Psoas muscle (tissue), 8 donors: ENCODE measurements at regions of chr12 and their contacts with region 1.

Region 1: DNA sequence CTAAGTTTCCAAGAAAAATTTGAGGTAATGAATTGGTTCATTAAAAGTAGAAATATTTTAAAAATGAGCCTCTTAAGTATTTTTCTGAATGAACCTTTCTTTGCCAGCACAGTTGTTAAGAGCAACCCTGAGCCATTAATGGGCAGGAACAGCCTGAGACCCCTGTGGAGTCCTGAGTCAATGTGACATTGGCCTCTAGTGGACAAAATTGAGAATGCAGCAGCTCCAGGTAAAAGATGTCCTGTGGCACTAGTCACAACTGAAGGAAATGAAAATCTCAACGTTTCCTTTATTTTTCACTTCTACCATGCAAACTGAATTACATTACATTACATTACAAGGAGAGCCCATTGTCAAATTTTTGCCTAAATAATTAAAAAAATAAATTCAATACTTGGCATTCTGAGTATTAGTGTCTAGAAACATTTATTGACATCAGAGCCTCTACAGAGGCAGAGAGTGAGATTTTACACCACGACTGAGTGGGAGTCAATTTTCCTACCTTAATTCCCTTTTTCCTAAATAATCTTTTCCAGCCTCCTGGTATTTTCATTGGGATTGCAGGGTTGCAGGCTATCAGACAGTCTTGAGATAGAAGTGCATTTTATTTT is 135.7 kb downstream of the PPM1H start:
- DNase-seq: no peak
- ATAC-seq: peak in 3 of 4 donors; percentile 56 to 84 (median 70)
- H3K4me3 ChIP-seq: no peak overlapping the region
- H3K27ac ChIP-seq: no peak overlapping the region
- H3K4me1 ChIP-seq: no peaks in the 10 kb centered on the region
- H3K27me3 ChIP-seq: no peaks in the 10 kb centered on the region
- CTCF ChIP-seq: peak; percentile 92

Region 2: DNA sequence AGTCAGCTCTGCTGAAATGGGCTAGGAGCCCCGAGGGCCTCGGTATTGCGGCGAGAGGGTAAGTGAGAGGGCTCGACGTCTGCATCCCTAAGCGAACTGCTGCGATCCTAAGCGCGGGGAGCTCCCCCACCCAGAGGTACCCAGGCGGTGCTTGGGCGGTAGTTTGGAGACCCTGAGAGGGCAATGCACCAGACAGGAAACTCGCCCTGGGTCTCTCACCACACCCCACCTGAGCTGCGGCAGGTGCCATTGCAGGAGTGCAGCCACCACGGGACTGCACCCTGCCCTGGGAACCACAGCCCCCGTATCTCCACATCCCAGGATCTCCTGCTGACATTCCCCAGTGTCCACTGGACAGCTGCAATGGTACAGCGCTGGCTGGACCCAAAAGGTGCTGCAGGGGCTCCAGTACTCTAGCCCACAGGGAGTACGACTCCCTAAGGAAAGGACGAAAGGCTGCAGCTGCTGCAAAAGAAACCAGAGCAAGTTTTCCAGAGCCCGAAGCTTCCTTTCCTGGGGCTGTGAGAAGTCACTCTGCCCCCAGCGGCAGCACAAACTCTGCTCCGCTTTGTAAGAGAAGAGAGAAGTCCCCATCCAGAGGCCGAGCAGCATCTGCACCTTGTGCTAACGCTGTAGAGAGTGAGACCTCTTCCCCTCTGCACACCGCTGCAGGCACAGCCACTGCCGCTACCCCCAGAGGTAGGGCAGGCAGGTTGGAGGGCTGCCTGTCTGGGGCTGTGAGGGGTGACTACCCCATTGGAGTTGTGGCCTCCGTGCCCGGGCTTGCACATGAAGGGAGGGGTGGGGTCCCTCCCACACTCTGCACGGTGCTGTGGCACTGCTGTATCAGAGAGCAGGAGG is 363.7 kb before region 1 on chr12:
- intact Hi-C with region 1: loop called (anchors 5 to 10 kb)
- DNase-seq: peak; percentile 27 to 52
- ATAC-seq: peak in 3 of 4 donors; percentile 53 to 73 (median 62)
- H3K4me3 ChIP-seq: peak overlapping the region; percentile 62
- H3K27ac ChIP-seq: no peak overlapping the region
- H3K4me1 ChIP-seq: no peaks in the 10 kb centered on the region
- H3K27me3 ChIP-seq: peaks cover 0 to 30% (median 4%) of the 10 kb centered on the region in 3 donors
- CTCF ChIP-seq: peak; percentile 25

Region 3: GRCh38 chr12:62537551-62537950 is 261.7 kb before region 1 on chr12:
- intact Hi-C with region 1: no loop called
- DNase-seq: no peak
- ATAC-seq: peak in 1 of 4 donors; percentile 56
- H3K4me3 ChIP-seq: no peak overlapping the region
- H3K27ac ChIP-seq: no peak overlapping the region
- H3K4me1 ChIP-seq: peaks cover 6% of the 10 kb centered on the region
- H3K27me3 ChIP-seq: no peaks in the 10 kb centered on the region
- CTCF ChIP-seq: no peak

Region 4: DNA sequence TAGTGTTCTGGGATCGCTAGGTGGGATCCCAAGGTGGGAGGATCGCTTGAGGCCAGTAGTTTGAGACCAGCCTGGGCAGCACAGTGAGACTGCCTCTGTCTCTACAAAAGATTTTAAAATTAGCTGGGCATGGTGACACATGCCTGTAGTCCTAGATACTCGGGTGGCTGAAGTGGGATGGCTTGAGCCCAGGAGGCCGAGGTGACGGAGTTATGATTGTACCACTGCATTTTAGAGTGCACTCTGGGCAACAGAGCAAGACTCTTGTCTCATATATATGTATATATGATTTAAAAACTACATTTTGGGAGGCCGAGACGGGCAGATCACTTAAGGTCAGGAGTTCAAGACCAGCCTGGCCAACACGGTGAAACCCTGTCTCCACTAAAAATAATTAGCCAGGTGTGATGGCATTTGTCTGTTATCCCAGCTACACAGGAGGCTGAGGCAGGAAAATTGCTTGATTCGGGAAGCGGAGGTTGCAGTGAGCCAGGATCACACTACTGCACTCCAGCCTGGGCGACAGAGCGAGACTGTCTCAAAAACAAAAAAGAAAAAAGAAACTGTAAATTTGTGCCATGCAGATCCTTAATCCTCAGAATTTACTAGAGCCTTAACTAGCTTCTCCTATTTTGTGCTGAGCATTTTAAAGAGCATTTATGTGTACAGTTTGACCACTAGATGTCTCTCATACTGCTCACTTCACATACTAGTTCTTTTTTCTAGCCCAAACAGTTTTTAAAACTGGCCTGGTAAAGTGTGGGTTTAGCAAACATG is 217.8 kb before region 1 on chr12:
- intact Hi-C with region 1: loop called (anchors 1 to 2 kb)
- DNase-seq: no peak
- ATAC-seq: peak; percentile 42 to 86 (median 72)
- H3K4me3 ChIP-seq: no peak overlapping the region
- H3K27ac ChIP-seq: no peak overlapping the region
- H3K4me1 ChIP-seq: no peaks in the 10 kb centered on the region
- H3K27me3 ChIP-seq: no peaks in the 10 kb centered on the region
- CTCF ChIP-seq: peak; percentile 74

Region 5: GRCh38 chr12:62724947-62725447 is 74.2 kb before region 1 on chr12:
- intact Hi-C with region 1: no loop called
- DNase-seq: no peak
- ATAC-seq: peak; percentile 59 to 86 (median 84)
- H3K4me3 ChIP-seq: no peak overlapping the region
- H3K27ac ChIP-seq: no peak overlapping the region
- H3K4me1 ChIP-seq: no peaks in the 10 kb centered on the region
- H3K27me3 ChIP-seq: no peaks in the 10 kb centered on the region
- CTCF ChIP-seq: no peak

Region 6: GRCh38 chr12:62813031-62813829 is 14.0 kb after region 1 on chr12:
- intact Hi-C with region 1: no loop called
- DNase-seq: peak; percentile 54 to 62
- ATAC-seq: peak in 3 of 4 donors; percentile 62 to 81 (median 73)
- H3K4me3 ChIP-seq: peak overlapping the region; percentile 26
- H3K27ac ChIP-seq: no peak overlapping the region
- H3K4me1 ChIP-seq: no peaks in the 10 kb centered on the region
- H3K27me3 ChIP-seq: no peaks in the 10 kb centered on the region
- CTCF ChIP-seq: peak; percentile 57

Region 7: GRCh38 chr12:62866451-62867082 is 67.3 kb after region 1 on chr12:
- intact Hi-C with region 1: no loop called
- DNase-seq: no peak
- ATAC-seq: peak in 1 of 4 donors; percentile 18
- H3K4me3 ChIP-seq: no peak overlapping the region
- H3K27ac ChIP-seq: no peak overlapping the region
- H3K4me1 ChIP-seq: peaks cover 6% of the 10 kb centered on the region
- H3K27me3 ChIP-seq: no peaks in the 10 kb centered on the region
- CTCF ChIP-seq: no peak